ENCODE measurements at regions of chr1 and their contacts with region 1.

Region 1: DNA sequence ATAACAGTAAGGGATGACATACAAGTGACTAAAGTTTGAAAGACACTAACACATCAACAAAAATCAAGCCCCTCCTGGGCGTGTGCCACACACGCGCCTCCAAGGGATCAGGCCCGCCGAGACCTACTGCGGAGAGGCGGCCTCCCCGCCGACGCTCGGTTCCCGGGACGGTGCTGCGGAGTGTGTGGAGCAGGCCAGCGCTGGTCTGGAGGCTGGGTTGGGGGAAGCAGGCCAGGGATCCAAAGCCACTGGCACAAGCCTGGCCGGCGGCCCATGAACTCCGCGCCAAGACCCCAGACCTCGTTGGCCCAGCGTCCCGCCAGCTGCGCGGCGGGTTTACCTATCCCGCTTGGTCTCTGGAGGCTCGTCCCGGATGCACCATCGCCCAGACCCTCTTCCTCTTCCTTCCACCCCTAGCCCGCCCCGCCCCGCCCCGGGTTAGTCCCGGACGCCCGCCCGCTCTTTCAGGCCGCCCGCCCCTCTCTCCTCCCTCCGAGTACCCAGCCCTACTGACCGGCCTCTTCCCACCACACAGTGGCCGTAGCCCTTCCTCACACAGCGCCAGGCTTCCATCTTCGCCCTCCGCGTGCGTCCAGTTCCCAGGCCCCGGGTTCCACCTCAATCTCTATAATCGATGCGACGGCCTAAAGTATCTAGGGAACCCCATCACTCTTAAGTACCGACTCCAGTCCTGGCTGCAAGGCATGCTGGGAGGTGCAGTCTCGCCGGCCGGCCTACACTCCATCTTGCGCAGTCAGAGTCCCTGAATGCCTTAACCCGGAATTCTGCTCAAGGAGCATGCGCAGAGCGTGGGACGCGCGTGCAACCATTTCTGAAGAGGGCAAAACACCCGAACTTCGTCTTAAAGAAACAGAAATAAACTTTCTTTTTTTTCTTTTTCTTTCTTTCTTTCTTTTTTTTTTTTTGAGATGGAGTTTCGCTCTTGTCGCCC is at the start of gene ANGEL2:
- DNase-seq: peak; percentile 97
- H3K4me3 Mint-ChIP-seq: peak within 1 kb of the TSS; percentile 100
- H3K27ac Mint-ChIP-seq: peak within 1 kb of the TSS; percentile 99
- H3K4me1 Mint-ChIP-seq: peaks cover 27% of the 10 kb centered on the region
- H3K27me3 Mint-ChIP-seq: no peaks in the 10 kb centered on the region
- total RNA-seq, gene ANGEL2: 39.5 to 42.9 TPM

Region 2: GRCh38 chr1:213003256-213003655 is 12.1 kb before region 1 on chr1:
- CTCF ChIA-PET with region 1: no interaction called
- intact Hi-C with region 1: loop called (anchors 1 kb)
- DNase-seq: peak; percentile 49
- H3K4me3 Mint-ChIP-seq: no peak overlapping the region
- H3K27ac Mint-ChIP-seq: peak overlapping the region; percentile 67
- H3K4me1 Mint-ChIP-seq: peaks cover 10% of the 10 kb centered on the region
- H3K27me3 Mint-ChIP-seq: no peaks in the 10 kb centered on the region

Region 3: DNA sequence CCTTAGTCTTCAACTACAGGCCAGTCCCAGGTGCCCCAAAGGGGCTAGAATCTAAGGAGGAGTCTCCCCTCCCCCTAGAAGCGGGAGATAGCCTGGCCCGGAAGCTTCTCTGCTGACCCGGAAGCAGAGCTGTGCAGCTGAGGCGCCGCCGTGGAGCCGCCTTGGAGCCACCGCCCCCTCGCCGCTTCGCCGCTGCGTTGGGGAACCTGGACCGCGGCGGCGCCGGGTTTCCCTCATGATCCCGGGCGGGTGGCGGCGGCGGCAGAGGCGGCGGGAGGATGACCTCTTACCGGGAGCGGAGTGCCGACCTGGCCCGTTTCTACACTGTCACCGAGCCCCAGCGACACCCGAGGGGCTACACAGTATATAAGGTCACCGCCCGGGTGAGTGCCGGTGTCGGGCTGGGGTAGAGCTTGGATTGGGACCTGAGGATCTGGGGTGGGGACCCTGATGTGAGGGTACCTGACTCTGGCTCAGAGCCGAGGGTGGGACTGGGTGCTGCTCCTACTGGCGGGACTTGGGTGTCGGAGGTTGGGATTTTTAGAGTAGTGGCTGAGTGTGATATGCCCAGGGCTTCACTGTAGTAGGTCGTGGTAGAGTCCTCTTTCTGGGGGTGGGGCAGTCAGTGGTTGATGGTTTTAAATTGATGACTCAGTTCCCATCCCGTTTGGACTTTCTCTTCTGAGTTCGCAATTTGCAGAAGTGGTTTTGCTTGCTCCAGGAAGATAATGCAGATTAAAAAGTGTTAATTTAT is 35.9 kb after region 1 on chr1 and contains the start of gene RPS6KC1:
- CTCF ChIA-PET with region 1: no interaction called
- intact Hi-C with region 1: loop called (anchors 1 kb)
- DNase-seq: peak; percentile 88
- H3K4me3 Mint-ChIP-seq: peak within 1 kb of the TSS; percentile 97
- H3K27ac Mint-ChIP-seq: peak within 1 kb of the TSS; percentile 82
- H3K4me1 Mint-ChIP-seq: peaks cover 30% of the 10 kb centered on the region
- H3K27me3 Mint-ChIP-seq: peaks cover 13% of the 10 kb centered on the region
- total RNA-seq, gene RPS6KC1: 5.4 to 6.1 TPM